Activated CD4-positive, alpha-beta T cell treated with anti-CD3 and anti-CD28 coated beads, Interleukin-2, amount 10 ng/mL, durations not matched to agents 7 days and 5 days (primary cell): ENCODE measurements at regions of chr1 and their contacts with region 1.

Region 1: GRCh38 chr1:28736450-28737306 is at the start of gene YTHDF2:
- DNase-seq: peak; percentile 98
- H3K4me3 Mint-ChIP-seq: peak within 1 kb of the TSS; percentile 91
- H3K27ac Mint-ChIP-seq: peak within 1 kb of the TSS; percentile 96
- H3K4me1 Mint-ChIP-seq: peaks cover 34% of the 10 kb centered on the region
- H3K27me3 Mint-ChIP-seq: no peaks in the 10 kb centered on the region
- total RNA-seq, gene YTHDF2: 76.3 to 89.2 TPM

Region 2: GRCh38 chr1:28642847-28643635 is 93.6 kb before region 1 on chr1 and contains the start of gene TAF12:
- CTCF ChIA-PET with region 1: interaction called, 24 read pairs
- POLR2A ChIA-PET with region 1: interaction called, 12 read pairs
- DNase-seq: peak; percentile 93
- H3K4me3 Mint-ChIP-seq: peak within 1 kb of the TSS; percentile 93
- H3K27ac Mint-ChIP-seq: peak within 1 kb of the TSS; percentile 98
- H3K4me1 Mint-ChIP-seq: peaks cover 46% of the 10 kb centered on the region
- H3K27me3 Mint-ChIP-seq: no peaks in the 10 kb centered on the region
- total RNA-seq, gene TAF12: 31.0 to 40.4 TPM

Region 3: GRCh38 chr1:28668191-28668955 is 68.3 kb before region 1 on chr1 and contains the start of gene GMEB1:
- CTCF ChIA-PET with region 1: interaction called, 17 read pairs
- POLR2A ChIA-PET with region 1: interaction called, 5 read pairs
- DNase-seq: peak; percentile 86
- H3K4me3 Mint-ChIP-seq: peak within 1 kb of the TSS; percentile 87
- H3K27ac Mint-ChIP-seq: peak within 1 kb of the TSS; percentile 95
- H3K4me1 Mint-ChIP-seq: peaks cover 13% of the 10 kb centered on the region
- H3K27me3 Mint-ChIP-seq: no peaks in the 10 kb centered on the region
- total RNA-seq, gene GMEB1: 26.8 to 27.2 TPM

Region 4: DNA sequence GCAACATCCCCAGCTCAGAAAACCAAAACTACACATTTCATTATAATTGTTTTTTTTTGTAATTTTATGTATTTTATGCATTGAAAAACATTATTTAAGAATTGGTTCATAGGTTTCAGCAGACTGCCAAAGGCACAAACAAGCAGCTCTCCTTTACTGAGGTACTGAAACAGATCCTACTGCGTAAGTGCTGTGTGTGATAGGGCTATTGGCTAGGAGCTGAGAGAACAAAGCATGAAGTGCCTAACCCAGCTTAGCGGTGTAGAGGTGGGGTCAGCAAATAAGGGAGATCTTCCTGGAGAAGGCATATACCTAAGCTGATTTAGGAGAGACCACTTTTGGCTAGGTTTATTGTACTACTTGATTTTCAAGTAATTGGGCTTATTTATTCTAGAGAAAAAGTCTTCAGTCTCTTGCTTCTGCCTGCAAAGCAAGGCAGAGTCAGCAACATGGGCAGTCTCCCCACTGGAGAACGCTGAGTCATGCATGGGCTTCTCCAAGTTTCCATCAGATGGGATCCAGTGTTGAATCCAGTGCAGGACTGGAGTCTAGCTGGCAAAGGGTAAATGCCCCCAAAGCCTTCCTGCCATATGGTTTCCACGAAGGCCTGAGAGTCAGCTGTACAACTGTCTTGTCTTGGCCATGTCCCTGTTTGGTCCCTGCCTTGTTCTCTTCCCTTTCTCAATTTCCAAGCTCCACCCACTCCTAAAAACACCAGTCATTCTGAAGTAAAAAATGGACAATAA is 17.9 kb before region 1 on chr1:
- CTCF ChIA-PET with region 1: interaction called, 34 read pairs
- POLR2A ChIA-PET with region 1: no interaction called
- DNase-seq: no peak
- H3K4me3 Mint-ChIP-seq: no peak overlapping the region
- H3K27ac Mint-ChIP-seq: no peak overlapping the region
- H3K4me1 Mint-ChIP-seq: no peaks in the 10 kb centered on the region
- H3K27me3 Mint-ChIP-seq: no peaks in the 10 kb centered on the region

Region 5: DNA sequence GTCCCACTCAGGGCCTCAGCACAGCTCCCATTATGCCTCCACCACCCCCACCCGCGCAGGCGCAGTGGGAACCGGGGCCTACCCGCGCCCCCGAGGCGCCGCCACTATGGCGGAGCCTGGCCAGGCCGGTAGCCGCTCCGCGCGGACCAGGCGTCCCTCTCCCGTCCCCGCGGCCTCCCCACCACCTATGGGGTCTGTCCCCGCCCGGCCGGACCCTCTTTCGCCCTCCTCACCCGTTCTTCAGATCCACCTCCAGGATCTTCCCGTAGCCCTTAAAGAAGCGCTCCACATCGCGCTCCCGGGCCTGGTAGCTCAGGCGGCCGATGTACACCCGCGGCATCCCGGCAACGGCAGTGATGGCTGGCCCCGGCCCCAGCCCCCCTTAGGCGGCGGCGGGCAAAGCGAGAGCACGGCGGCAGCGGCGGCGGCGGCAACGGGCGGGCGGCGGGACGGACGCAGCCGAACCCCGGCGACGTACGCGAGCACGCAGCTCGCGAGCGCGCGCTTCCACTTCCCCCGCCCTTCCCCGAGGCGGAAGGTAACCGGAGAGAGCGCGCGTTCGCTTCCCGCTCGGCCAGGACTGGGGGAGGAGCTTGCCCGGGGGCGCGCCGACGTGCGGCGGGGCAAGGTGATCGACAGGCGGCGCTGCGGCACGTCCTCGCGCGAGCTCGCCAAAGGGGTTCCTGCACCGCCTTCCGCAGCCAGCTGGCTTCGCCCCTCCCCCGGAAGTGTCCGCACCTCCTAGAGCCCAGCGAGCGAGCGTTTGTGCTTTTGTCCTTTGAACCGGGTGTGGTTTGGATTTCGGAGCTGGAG is 444.9 kb after region 1 on chr1 and contains the start of gene SRSF4:
- CTCF ChIA-PET with region 1: interaction called, 10 read pairs
- POLR2A ChIA-PET with region 1: no interaction called
- DNase-seq: peak; percentile 99
- H3K4me3 Mint-ChIP-seq: peak within 1 kb of the TSS; percentile 96
- H3K27ac Mint-ChIP-seq: peak within 1 kb of the TSS; percentile 97
- H3K4me1 Mint-ChIP-seq: peaks cover 45% of the 10 kb centered on the region
- H3K27me3 Mint-ChIP-seq: no peaks in the 10 kb centered on the region
- total RNA-seq, gene SRSF4: 116 to 123 TPM